ENCODE measurements at regions of chr6 and their contacts with region 1.

Region 1: GRCh38 chr6:75526502-75527127 is 33.0 kb upstream of the FILIP1 start:
- DNase-seq: no peak
- H3K4me3 ChIP-seq: no peak overlapping the region
- H3K27ac ChIP-seq: no peak overlapping the region
- H3K4me1 ChIP-seq: peaks cover 7% of the 10 kb centered on the region
- H3K27me3 ChIP-seq: no peaks in the 10 kb centered on the region
- CTCF ChIP-seq: peak; percentile 37 to 73 (median 61)
- POLR2A ChIP-seq: no peak

Region 2: DNA sequence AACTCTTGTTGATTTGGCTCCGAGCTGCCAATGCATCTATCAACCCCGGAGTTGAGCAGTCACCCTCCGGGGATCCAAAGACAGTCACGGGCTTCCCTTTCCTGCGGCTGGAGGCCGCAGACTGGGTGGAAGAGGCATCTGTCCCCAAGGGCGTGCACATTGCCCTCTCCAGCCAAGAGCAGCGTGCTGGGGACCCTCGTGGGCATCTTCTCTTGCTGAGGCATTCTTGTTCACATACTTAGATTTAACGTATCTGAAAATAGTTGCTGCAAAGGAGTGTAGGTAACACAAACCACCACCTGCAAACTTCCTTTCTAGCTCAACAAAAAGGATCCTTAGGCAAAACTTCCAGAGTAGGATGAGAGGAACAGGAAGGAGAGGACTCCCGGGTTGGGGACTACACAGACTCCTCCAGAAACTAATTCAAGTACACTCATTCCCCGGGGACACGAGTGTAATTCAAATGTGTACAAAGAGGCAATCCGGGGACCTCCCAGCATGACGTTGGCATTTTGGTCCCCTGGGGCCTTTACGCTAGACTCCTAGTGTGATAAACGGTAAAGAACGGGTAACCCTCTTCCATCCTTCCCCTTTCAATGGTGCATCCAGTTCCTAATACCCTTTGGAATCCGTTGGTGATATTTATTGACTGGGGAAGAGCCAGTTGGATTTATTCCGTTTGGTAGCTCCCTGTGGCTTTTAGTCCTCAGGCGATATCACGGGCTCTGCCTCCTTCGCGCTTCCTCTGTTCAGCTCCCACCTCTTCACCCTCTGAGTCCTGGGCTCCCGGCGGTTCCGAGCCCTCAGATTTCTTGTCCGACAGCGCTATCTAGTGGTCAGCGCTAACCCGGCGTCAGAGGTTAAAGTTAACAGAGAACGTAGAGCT is 318.1 kb before region 1 on chr6:
- intact Hi-C with region 1: no loop called
- DNase-seq: no peak
- H3K4me3 ChIP-seq: peak overlapping the region; percentile 12 to 17
- H3K27ac ChIP-seq: peak overlapping the region; percentile 67
- H3K4me1 ChIP-seq: peaks cover 45% of the 10 kb centered on the region
- H3K27me3 ChIP-seq: no peaks in the 10 kb centered on the region
- CTCF ChIP-seq: peak; percentile 85 to 88 (median 87)
- POLR2A ChIP-seq: no peak

Region 3: GRCh38 chr6:75257343-75258087 is 269.1 kb before region 1 on chr6:
- intact Hi-C with region 1: loop called (anchors 10 kb)
- DNase-seq: no peak
- H3K4me3 ChIP-seq: no peak overlapping the region
- H3K27ac ChIP-seq: no peak overlapping the region
- H3K4me1 ChIP-seq: no peaks in the 10 kb centered on the region
- H3K27me3 ChIP-seq: no peaks in the 10 kb centered on the region
- CTCF ChIP-seq: no peak
- POLR2A ChIP-seq: no peak

Measured in vagina (tissue), 2 donors.